Activated naive CD4-positive, alpha-beta T cell treated with anti-CD3 and anti-CD28 coated beads for 36 hours (primary cell): ENCODE measurements at regions of chr10 and their contacts with region 1.

Region 1: DNA sequence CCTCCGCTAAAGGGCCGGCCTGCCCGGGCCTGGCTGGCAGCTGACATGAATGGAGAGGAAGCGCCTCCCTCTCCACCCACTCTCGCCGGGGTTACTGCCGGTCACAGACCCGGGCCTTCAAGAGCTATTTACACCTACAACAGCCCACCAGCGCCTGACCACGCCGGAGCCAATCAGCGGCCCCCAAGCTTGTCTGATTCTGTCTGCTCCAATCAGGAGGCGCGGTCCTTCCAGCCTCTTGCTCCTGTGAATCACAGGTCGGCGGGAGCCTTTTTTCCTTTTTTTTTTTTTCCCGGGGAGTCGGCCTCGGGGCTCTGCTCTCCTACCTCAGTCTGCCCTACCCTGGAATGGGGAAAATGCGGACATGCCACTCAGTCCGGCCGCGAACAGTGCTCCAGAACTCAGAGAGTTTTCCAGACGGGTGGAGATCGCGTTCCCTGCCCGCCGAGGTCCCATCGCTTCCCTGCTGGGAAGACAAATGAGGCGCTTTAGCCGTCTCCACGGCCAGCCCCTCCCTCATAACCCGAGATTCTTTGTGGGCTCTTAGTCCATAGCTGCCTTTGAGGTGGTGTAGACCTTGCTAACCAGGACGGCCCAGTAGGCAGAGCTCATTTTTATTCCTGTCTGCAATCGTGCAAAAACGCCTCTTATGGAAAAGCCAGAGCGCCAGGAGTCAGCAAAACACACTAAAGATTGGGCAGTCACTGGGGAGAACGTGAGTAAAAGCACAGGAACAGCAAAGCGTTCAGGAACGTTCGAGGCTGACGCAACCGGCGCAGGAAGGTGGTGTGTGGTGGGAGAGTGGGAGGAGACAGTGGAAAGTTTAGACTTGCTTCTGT is 26.5 kb downstream of the SCD start:
- DNase-seq: peak; percentile 99
- H3K4me3 Mint-ChIP-seq: no peak overlapping the region
- H3K27ac Mint-ChIP-seq: no peak overlapping the region
- H3K4me1 Mint-ChIP-seq: peaks cover 30% of the 10 kb centered on the region
- H3K27me3 Mint-ChIP-seq: no peaks in the 10 kb centered on the region

Region 2: DNA sequence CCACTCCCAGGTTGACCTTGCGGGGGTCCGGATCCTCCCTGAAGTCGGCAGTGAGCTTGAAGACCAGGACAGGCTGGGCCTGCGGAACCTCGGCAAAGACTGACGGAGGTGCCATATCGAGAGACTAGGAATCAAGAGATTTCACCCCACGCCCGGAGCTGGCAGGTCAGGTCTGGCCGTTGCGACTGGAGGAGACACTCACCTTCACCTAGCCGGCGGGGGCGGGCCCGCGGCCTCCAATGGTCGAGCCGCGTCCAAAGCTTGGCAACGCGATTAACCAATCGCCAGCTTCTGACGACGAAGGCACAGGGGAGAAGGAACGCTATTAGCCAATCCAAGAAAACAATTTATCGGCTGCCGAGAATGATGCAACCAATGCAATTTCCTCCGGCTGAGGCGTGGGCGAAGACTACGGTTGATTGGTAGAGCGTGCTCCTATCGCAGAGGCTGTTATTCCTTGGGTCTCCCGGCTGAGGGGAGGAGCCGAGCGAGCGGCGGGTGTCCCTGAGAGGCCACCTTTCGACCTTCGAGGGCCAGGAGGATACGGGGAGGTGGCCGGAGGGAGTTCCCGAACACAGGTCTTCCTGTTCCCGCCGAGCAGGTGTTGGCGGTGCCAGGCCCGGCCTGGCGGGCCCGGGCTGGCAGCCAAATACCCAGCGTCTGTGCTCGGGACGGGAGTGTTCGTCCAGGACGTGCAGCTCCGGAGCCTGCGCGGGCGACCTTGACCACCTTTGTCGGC is 942.9 kb before region 1 on chr10 and contains the start of gene GOT1:
- CTCF ChIA-PET with region 1: no interaction called
- intact Hi-C with region 1: loop called (anchors 5 kb)
- DNase-seq: peak; percentile 99
- H3K4me3 Mint-ChIP-seq: peak within 1 kb of the TSS; percentile 95
- H3K27ac Mint-ChIP-seq: peak within 1 kb of the TSS; percentile 90
- H3K4me1 Mint-ChIP-seq: peaks cover 38% of the 10 kb centered on the region
- H3K27me3 Mint-ChIP-seq: no peaks in the 10 kb centered on the region
- total RNA-seq, gene GOT1: 62.6 to 67.3 TPM

Region 3: GRCh38 chr10:100163704-100164621 is 209.6 kb before region 1 on chr10:
- CTCF ChIA-PET with region 1: no interaction called
- intact Hi-C with region 1: no loop called
- DNase-seq: no peak
- H3K4me3 Mint-ChIP-seq: no peak overlapping the region
- H3K27ac Mint-ChIP-seq: peak overlapping the region; percentile 71
- H3K4me1 Mint-ChIP-seq: peaks cover 47% of the 10 kb centered on the region
- H3K27me3 Mint-ChIP-seq: no peaks in the 10 kb centered on the region

Region 4: GRCh38 chr10:100185364-100186252 is 187.9 kb before region 1 on chr10 and contains the start of gene ERLIN1:
- CTCF ChIA-PET with region 1: no interaction called
- intact Hi-C with region 1: loop called (anchors 1 kb)
- DNase-seq: peak; percentile 95
- H3K4me3 Mint-ChIP-seq: peak within 1 kb of the TSS; percentile 96
- H3K27ac Mint-ChIP-seq: peak within 1 kb of the TSS; percentile 95
- H3K4me1 Mint-ChIP-seq: peaks cover 58% of the 10 kb centered on the region
- H3K27me3 Mint-ChIP-seq: no peaks in the 10 kb centered on the region
- total RNA-seq, gene ERLIN1: 18.4 to 18.7 TPM

Region 5: DNA sequence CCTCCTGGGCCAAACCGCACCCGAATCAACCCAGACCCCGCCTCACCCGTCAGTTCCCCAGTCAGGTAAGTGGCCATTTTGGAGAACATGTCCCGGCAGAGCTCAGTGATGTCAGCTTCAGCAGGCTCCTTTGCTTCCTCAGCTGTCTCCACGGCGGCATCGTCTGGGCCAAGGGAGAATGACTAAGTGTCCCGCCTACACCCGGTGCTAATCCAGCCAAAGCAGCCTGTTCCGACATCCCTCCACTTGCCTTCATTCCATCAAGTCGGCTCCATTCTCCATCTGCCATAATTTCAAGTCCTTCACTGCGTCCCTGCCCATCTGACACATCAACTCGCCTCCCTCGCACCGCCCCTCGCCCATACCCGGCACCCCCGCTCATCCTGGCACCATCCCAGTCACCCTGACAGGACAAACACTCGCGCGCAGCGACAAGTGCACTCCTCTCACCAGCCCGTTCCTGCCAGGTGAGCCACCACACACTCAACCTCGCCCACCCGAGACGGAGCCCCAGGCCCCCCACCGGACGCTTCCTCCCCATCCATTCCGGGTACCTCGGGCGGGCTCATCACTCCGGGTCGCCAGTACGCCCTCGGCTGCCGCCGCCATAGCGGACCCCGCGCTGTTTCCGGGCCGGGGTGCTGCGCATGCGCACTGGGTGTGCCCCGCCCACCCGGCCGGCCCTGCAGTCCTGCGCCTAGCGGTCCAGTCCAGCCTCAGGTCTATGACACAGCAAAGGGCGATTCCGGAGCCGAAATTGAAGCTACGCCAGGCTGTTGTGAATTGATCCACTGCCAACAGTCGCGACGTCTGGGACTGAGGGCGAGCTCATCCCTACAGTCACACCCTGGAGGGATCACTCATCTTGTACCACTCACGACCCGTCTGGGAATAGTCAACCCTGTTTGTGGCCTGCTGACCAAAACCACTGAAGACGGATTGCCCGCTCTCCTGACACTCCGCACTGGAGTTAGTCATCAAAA is 87.2 kb before region 1 on chr10 and contains the start of gene BLOC1S2:
- CTCF ChIA-PET with region 1: no interaction called
- intact Hi-C with region 1: loop called (anchors 1 kb)
- DNase-seq: peak; percentile 87
- H3K4me3 Mint-ChIP-seq: peak within 1 kb of the TSS; percentile 99
- H3K27ac Mint-ChIP-seq: peak within 1 kb of the TSS; percentile 98
- H3K4me1 Mint-ChIP-seq: peaks cover 25% of the 10 kb centered on the region
- H3K27me3 Mint-ChIP-seq: no peaks in the 10 kb centered on the region
- total RNA-seq, gene BLOC1S2: 68.5 to 69.1 TPM

Region 6: DNA sequence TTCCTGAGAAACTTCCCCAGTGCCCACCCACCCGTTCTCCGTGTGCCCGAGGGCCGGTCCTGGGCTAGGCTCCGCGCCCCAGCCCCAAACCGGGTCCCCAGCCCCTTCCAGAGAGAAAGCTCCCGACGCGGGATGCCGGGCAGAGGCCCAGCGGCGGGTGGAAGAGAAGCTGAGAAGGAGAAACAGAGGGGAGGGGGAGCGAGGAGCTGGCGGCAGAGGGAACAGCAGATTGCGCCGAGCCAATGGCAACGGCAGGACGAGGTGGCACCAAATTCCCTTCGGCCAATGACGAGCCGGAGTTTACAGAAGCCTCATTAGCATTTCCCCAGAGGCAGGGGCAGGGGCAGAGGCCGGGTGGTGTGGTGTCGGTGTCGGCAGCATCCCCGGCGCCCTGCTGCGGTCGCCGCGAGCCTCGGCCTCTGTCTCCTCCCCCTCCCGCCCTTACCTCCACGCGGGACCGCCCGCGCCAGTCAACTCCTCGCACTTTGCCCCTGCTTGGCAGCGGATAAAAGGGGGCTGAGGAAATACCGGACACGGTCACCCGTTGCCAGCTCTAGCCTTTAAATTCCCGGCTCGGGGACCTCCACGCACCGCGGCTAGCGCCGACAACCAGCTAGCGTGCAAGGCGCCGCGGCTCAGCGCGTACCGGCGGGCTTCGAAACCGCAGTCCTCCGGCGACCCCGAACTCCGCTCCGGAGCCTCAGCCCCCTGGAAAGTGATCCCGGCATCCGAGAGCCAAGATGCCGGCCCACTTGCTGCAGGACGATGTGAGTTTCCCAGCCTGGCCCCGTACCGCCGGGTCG is 26.6 kb before region 1 on chr10 and contains the start of gene SCD:
- CTCF ChIA-PET with region 1: interaction called, 10 read pairs
- intact Hi-C with region 1: loop called (anchors 1 kb)
- DNase-seq: peak; percentile 95
- H3K4me3 Mint-ChIP-seq: peak within 1 kb of the TSS; percentile 97
- H3K27ac Mint-ChIP-seq: peak within 1 kb of the TSS; percentile 87
- H3K4me1 Mint-ChIP-seq: peaks cover 45% of the 10 kb centered on the region
- H3K27me3 Mint-ChIP-seq: no peaks in the 10 kb centered on the region
- total RNA-seq, gene SCD: 161 to 169 TPM

Region 7: DNA sequence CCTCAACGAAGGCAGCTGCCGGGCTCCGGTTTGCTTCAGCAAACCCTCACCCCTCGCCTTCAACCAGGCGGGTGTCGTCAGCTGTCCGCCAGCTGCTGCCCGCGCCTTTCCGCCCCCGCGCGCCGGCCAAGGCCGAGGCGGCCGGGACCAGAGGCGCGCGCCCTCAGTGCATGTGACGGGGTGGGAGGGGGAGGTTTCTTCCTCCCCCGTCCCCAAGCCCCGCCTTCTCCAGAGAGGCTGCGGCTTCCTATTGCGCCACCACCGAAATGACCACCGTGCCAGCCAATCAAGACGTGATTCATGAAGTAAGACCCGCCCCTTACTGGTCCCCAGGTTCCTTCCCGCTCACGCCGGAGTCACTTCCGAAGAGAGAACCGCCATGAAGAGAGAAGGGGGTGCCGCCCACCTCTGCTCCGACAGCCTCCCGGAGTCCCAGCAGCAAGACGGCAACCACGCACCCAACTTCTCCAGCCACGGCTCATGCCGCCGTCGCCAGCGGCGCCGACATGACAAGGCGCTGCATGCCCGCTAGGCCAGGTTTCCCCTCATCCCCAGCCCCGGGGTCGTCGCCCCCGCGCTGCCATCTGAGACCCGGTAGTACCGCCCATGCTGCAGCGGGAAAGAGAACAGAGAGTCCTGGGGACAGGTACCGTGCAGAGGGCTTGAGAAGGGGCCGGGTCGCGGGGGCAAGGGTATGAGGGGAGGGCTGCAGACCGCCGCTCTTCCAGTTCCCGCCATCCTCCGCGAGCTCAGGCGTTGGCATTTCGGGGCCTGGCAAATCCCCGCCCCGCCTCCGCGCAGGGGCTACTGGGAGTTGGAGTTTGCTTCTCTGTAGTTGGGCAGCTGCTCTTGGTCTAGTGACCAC is 539.3 kb after region 1 on chr10 and contains the start of gene SLF2:
- CTCF ChIA-PET with region 1: no interaction called
- intact Hi-C with region 1: loop called (anchors 1 kb)
- DNase-seq: peak; percentile 98
- H3K4me3 Mint-ChIP-seq: peak within 1 kb of the TSS; percentile 98
- H3K27ac Mint-ChIP-seq: peak within 1 kb of the TSS; percentile 99
- H3K4me1 Mint-ChIP-seq: peaks cover 42% of the 10 kb centered on the region
- H3K27me3 Mint-ChIP-seq: no peaks in the 10 kb centered on the region
- total RNA-seq, gene SLF2: 29.3 to 30.3 TPM